Activated CD8-positive, alpha-beta T cell treated with anti-CD3 and anti-CD28 coated beads, Interleukin-2, amount 10 ng/mL, durations not matched to agents 7 days and 5 days (primary cell): ENCODE measurements at regions of chr20 and their contacts with region 1.

Region 1: DNA sequence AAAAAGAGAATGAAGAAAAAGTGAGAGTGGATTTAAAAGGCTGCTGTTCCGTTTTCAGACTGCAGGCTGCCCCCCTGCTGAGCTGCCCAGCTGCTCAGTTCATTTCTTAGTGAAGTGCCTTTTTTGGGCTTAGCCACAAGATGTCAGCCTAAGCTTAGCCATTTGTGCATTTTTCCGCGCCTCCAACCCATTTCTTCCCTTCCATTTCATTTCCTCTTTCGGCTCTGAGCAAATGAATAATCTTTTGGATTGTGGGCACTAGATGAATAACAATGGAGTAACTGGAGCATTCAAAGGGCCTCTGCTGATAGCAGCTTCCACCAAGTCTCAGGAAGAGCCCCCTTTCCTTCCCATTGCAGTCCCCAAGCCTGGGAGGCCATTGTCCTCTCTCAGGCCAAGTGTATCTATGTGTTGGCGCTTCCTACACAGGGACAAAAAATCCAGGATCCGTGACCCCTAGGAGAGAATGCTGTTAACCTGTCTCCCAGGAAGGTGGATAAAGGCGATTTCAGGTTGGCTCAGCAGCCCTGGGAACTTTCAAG is 83.5 kb upstream of the SPTLC3 start:
- DNase-seq: peak; percentile 47
- ATAC-seq: peak; percentile 82
- H3K4me3 Mint-ChIP-seq: no peak overlapping the region
- H3K27ac Mint-ChIP-seq: no peak overlapping the region
- H3K4me1 Mint-ChIP-seq: peaks cover 8% of the 10 kb centered on the region
- H3K27me3 Mint-ChIP-seq: peaks cover 2% of the 10 kb centered on the region

Region 2: DNA sequence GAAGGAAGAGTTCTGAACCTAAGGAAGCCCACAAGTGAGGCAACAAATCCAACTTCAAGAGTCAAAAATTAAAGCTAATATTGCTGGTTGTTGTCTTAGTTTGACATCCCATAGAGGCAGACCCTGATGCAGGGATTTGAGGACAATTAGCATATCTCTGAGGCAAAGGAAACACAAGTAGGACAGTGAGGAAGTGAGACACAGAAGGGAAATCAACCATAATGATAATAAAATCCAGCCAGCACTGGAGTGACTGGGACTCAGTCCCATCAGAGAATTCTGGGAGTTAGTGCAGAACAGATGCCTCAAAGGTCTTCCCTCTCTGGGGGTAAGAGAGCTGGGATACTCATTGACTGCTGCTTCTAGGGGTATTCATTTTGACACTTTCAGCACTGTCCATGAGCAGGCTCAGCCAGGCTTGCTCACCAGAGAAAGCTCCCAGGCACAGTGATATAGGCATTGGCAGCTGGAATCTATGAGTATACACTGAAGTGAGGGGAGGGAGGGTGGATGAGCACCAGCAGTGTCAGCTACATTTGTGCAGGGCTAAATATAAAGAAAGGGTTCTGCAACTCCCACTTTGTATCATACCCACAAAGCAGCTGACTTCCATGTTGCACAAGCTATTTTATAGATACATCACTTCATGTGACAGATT is 40.1 kb after region 1 on chr20:
- CTCF ChIA-PET with region 1: interaction called, 16 read pairs
- POLR2A ChIA-PET with region 1: no interaction called
- DNase-seq: no peak
- ATAC-seq: no peak
- H3K4me3 Mint-ChIP-seq: no peak overlapping the region
- H3K27ac Mint-ChIP-seq: no peak overlapping the region
- H3K4me1 Mint-ChIP-seq: no peaks in the 10 kb centered on the region
- H3K27me3 Mint-ChIP-seq: peaks cover 2% of the 10 kb centered on the region

Region 3: GRCh38 chr20:13102699-13103098 is 177.4 kb after region 1 on chr20:
- CTCF ChIA-PET with region 1: interaction called, 10 read pairs
- POLR2A ChIA-PET with region 1: no interaction called
- DNase-seq: no peak
- ATAC-seq: no peak
- H3K4me3 Mint-ChIP-seq: no peak overlapping the region
- H3K27ac Mint-ChIP-seq: no peak overlapping the region
- H3K4me1 Mint-ChIP-seq: no peaks in the 10 kb centered on the region
- H3K27me3 Mint-ChIP-seq: peaks cover 3% of the 10 kb centered on the region